WTC11 (cell line): ENCODE measurements at regions of chr6 and their contacts with region 1.

Region 1: DNA sequence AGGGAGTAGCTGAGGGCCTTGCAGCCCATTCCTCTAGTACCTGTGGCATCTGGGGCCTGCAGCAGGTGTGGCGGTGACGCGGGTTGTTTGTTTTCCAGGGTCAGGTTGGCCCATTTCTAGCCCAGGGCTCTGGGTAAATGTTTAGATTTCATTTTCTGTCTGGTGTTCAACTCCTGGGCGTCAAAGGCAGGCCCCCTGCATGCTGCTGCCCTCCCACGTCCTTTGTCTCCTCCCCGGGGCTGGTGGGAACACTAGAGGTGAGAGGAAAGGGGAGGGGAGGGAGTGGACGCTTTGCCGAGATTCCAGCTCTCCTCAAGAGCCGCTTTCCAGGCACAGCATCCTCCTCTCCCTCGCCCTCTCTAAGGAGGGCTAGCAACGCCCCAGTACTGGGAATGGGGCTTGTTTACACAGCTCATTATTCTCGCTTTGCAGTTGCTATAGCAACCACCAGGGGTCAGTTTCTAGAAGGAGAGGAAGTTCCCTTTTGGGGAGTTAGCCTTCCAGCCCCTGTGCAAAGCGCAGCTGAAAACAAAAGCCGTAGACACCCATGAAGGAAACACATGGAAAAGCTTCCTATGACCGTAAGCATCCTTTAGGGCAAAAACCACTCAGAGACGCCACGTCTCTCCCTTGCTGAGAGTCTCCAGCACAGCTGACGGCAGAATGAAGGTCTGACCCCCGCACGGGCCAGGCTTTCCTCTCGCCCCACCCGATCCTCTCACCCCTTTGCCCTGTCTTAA is 170.6 kb downstream of the LY86 start:
- DNase-seq: peak; percentile 80
- ATAC-seq: peak; percentile 97
- H3K4me3 Mint-ChIP-seq: peak overlapping the region; percentile 57
- H3K27ac Mint-ChIP-seq: peak overlapping the region; percentile 95
- H3K4me1 Mint-ChIP-seq: peaks cover 21% of the 10 kb centered on the region
- H3K27me3 Mint-ChIP-seq: no peaks in the 10 kb centered on the region
- CTCF ChIP-seq: peak; percentile 48

Region 2: DNA sequence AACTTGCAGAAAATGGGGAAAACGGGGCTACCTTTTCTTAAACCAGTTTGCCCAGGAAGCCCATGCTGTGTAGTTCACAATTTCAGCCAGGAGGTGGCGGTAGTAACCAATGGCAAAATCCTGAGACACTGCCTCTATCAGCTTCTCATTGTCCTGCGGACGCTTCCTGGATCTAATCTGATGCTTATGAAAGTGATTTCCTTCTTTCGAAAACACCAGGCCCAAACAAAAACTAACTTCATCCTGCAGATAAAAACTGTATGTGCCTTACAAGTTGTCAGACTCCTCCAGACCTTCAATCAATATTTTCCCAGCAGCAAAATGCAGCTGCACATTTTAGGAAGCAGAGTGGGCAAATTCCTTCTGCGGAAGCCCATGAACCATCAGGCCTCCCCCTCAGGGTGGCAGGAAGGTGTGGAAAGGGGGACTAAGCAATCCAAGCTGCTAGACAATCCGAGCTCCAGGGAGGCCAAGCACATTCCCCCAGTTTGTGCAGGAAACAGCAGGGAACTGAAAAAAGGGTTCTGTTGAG is 82.1 kb before region 1 on chr6:
- CTCF ChIA-PET with region 1: interaction called, 16 read pairs
- POLR2A ChIA-PET with region 1: no interaction called
- DNase-seq: peak; percentile 86
- ATAC-seq: peak; percentile 69
- H3K4me3 Mint-ChIP-seq: 0 out of 2 replicates have a peak overlapping the region, but pooled peaks have one; percentile 16
- H3K27ac Mint-ChIP-seq: peak overlapping the region; percentile 39
- H3K4me1 Mint-ChIP-seq: peaks cover 29% of the 10 kb centered on the region
- H3K27me3 Mint-ChIP-seq: no peaks in the 10 kb centered on the region
- CTCF ChIP-seq: peak; percentile 95

Region 3: DNA sequence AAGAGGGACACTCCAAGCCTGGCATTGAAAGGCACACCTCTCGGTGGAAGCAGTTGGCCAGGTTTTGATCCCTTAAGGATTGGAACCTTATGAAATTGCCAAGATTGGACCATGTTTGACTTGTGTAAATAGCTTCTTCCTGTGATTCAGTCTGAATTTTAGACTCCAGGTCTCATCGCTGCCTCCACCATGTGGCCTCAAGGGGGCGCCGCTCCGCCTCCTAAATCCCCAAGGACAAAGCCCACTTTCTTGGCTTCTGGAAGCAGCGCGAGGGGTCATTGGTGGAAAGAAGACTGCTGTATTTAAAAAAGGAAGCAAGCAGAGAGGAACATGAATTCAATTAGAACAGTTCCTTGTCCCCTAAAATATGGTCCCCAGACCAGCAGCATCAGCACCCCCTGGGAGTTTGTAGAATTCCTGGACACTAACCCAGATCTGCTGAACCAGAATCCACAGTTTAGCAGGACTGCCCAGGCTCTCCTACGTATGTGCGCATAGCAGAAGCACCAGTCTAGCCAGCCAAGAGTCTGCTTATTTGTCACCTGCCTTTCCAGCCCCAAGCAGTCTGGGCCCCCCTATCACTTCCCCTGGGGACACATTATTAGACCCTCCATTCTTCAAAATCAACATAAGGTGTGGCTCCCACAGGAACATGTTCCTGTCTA is 62.1 kb before region 1 on chr6:
- CTCF ChIA-PET with region 1: interaction called, 13 read pairs
- POLR2A ChIA-PET with region 1: interaction called, 3 read pairs
- DNase-seq: peak; percentile 79
- ATAC-seq: peak; percentile 26
- H3K4me3 Mint-ChIP-seq: no peak overlapping the region
- H3K27ac Mint-ChIP-seq: no peak overlapping the region
- H3K4me1 Mint-ChIP-seq: peaks cover 46% of the 10 kb centered on the region
- H3K27me3 Mint-ChIP-seq: peaks cover 17% of the 10 kb centered on the region
- CTCF ChIP-seq: peak; percentile 80

Region 4: DNA sequence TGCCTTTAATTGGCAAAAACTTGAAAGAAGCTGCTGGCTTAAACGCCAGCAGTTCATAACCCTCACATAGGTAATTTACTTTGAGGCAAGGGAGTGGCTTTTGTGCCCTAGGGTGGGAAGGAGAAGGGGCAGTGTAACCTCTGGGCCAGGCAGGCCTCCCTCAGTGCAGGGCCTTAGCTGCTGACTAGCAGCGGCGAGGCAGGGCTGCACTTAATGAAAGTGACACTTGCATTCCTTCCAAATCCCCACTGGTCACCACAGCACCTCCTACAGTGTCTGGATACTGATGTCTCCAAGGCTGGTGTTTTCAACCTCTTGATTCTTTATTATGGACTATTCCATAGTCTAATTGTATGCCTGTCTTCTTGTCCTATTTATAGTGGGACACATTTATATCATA is 17.9 kb before region 1 on chr6:
- CTCF ChIA-PET with region 1: interaction called, 16 read pairs
- POLR2A ChIA-PET with region 1: no interaction called
- DNase-seq: no peak
- ATAC-seq: peak; percentile 18; the same call in 1 of the 2 replicates
- H3K4me3 Mint-ChIP-seq: no peak overlapping the region
- H3K27ac Mint-ChIP-seq: no peak overlapping the region
- H3K4me1 Mint-ChIP-seq: peaks cover 29% of the 10 kb centered on the region
- H3K27me3 Mint-ChIP-seq: no peaks in the 10 kb centered on the region; the same call in 1 of the 2 replicates
- CTCF ChIP-seq: no peak

Region 5: DNA sequence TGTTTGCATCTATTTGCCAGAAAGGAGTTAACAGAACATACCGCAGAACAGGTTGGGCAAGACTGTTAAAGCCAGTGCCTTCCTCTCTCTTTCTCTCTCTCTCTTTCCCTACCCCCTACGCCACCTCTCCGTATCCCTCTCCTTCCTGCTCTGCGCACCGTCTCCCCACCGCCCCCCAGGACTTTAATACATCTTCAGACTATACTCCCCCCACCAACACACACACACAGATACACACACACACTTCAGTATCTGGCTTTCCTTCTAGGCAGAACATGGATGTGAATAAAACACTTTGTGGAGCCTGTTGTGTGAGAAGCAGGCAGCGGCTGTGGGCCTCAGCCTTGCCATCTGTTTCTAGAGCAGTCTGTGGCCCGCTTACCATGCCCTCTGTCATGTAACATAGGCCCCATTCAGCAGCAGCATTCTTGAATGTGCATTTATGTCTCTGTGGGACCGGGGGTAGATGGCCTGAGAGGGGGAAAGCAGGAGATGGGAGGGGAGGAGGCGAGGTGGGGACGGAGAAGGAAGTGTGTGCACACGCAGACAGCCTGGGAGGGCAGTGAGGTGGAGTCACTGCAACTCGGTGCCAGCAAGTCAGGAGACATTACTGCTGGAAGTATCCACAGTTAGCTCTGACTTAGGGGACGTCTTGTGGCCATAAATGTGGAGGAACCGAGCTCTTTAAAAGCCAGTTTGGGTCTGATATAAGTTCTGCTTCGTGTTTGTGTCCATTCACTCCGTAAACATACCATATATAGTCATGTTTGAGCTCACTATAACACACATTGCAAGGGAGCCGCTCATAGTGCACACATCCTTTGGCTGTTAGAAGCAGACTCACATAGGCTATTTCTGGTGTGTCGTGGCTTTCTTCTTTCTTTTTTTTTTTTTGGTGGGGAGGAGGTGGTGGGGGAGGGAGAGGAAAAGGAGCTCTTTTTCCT is 387.1 kb after region 1 on chr6:
- CTCF ChIA-PET with region 1: interaction called, 10 read pairs
- POLR2A ChIA-PET with region 1: no interaction called
- DNase-seq: no peak
- ATAC-seq: peak; percentile 49
- H3K4me3 Mint-ChIP-seq: peak overlapping the region; percentile 59
- H3K27ac Mint-ChIP-seq: peak overlapping the region; percentile 98
- H3K4me1 Mint-ChIP-seq: peaks cover 81% of the 10 kb centered on the region
- H3K27me3 Mint-ChIP-seq: no peaks in the 10 kb centered on the region
- CTCF ChIP-seq: no peak